ENCODE measurements at regions of chr2 and their contacts with region 1.

Region 1: GRCh38 chr2:64644177-64645004 is 9.3 kb downstream of the SERTAD2 start:
- DNase-seq: peak; percentile 82
- ATAC-seq: peak; percentile 75
- H3K4me3 Mint-ChIP-seq: peak overlapping the region; percentile 82
- H3K27ac Mint-ChIP-seq: peak overlapping the region; percentile 90
- H3K4me1 Mint-ChIP-seq: peaks cover 89% of the 10 kb centered on the region
- H3K27me3 Mint-ChIP-seq: no peaks in the 10 kb centered on the region
- CTCF ChIP-seq: no peak

Region 2: DNA sequence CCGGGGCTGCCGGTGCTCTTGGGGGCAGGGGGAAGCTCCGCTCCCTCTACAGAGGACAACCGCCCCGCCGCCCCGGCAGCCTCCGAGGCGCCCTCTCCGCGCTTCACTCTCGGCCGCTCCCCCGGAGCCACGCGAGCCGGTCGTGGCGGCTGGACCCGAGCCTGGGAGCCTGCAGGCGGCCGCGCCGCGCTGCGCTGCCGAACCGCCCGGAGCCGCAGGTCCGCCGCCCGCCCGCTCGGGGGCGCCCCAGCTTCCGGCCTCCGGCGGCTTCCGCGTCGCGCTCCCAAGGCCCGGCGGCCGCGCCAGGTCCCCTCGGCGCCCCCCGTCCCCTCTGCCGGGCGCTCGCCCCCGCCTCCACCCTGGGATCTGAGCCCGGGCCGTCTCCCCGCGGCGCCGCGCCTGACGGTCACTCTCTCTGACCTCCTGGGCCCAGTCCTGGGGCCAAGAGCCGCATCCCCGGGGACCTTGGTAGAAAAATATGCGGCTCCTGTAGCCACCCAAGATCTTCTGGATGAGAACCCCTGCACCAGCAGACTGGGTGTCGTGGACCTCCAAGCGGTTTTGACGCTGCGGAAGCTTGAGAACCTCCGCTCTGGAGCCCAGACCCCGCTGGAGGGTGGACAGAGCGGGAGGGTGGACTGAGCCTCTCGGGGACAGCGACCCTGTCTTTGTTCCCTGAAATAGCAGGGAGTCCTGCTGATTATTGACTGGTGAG is 35.0 kb before region 1 on chr2:
- CTCF ChIA-PET with region 1: interaction called, 42 read pairs
- POLR2A ChIA-PET with region 1: interaction called, 25 read pairs
- intact Hi-C with region 1: loop called (anchors 5 kb)
- DNase-seq: peak; percentile 60
- ATAC-seq: peak; percentile 60
- H3K4me3 Mint-ChIP-seq: peak overlapping the region; percentile 60
- H3K27ac Mint-ChIP-seq: peak overlapping the region; percentile 59
- H3K4me1 Mint-ChIP-seq: peaks cover 22% of the 10 kb centered on the region
- H3K27me3 Mint-ChIP-seq: no peaks in the 10 kb centered on the region
- CTCF ChIP-seq: peak; percentile 26

Region 3: DNA sequence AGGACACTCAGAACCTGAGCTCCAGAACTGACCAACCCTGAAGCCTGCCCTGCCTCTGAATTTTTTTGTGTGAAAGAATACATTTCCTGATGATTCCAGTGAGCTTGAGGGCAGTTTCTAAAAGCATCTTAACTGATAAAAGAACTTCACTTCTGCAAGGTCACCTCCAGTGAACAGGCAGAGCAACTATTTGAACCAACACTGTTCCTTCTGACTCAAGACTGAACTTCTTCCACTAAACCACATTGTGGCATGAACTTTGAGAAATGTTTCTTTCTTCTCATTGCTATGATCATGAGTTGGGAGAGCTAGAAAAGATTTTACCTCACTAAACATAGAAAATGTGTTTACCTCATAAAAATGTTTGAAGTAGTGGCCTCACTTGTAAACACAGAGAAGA is 93.2 kb after region 1 on chr2:
- CTCF ChIA-PET with region 1: interaction called, 12 read pairs
- POLR2A ChIA-PET with region 1: interaction called, 3 read pairs
- intact Hi-C with region 1: no loop called
- DNase-seq: peak; percentile 37
- ATAC-seq: peak; percentile 82
- H3K4me3 Mint-ChIP-seq: peak overlapping the region; percentile 47
- H3K27ac Mint-ChIP-seq: peak overlapping the region; percentile 88
- H3K4me1 Mint-ChIP-seq: peaks cover 40% of the 10 kb centered on the region
- H3K27me3 Mint-ChIP-seq: no peaks in the 10 kb centered on the region
- CTCF ChIP-seq: no peak

Region 4: DNA sequence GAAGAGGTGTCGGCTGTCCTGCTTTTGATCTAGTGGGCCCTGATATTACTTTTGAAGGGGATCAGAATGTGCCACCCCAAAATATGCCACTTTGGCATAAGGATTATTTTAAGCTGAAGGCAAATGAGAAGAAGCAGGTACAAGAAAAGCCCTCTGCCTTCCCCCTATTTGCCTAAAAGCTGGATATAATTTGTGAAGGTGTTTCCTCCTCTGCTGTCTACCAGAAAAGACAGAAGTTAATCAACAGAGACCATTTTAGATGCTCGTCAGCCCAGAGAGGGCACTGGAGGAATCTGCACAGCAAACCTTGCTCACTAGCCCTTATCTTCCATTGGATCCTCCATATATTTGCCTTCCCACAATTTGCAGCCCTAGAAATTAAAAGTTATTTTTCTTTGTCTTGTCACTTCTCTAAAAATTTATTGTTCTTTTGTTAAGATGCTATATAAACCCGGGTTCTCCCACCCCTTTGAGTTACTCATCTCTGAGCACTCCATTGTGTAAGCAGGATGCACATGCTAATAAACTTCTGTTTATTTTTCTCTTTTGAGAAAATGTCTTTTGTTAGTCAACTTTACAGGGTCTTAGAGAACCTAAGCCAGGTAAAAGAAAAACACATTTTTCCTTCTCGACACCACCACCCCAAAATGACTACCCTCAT is 181.6 kb after region 1 on chr2:
- CTCF ChIA-PET with region 1: interaction called, 20 read pairs
- POLR2A ChIA-PET with region 1: interaction called, 4 read pairs
- intact Hi-C with region 1: loop called (anchors 5 kb)
- DNase-seq: no peak
- ATAC-seq: no peak
- H3K4me3 Mint-ChIP-seq: no peak overlapping the region
- H3K27ac Mint-ChIP-seq: no peak overlapping the region
- H3K4me1 Mint-ChIP-seq: peaks cover 7% of the 10 kb centered on the region
- H3K27me3 Mint-ChIP-seq: no peaks in the 10 kb centered on the region
- CTCF ChIP-seq: no peak

Region 5: DNA sequence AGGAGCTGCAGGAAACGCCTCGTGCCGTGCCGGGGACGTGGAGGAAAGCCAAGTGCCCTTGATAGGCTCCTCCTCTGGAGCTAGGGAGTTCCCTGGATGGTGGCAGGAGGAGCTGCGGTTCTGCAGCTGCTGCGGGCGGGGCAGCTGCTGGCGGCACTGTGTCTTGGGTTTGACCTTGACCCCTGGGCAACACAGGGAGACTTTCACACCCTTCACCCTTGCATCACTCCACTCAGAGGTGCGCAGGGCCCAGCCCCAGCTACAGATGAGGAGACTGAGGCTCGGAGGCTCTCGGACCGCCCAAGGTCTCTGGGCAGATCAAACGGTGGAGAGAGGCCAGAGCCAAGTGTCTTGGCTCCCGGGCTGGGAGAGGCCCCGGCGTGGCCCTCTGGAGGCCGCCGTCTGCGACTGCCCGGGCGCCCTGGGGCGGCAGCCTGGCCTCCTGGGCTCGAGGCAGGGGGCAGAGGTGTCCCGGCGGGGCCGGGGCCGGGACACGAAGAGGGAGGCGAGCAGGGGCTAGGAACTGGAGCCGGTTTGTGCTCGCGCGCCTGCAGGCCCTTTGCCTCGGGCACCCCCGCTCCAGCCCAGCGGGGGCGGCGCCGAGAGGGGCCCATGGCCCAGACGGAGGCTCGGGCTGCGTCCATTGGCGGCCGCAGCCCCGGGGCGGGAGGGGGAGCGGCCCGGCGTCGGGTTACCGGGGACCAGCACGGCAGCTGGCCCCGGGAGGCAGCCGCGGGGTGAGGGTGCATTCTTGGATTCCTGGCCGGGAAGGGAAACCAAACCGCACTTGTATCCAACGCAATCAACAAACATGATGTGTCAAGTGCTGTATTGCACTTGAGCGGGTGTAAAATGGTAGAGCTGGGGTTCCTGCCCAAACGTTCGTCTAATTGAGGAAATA is 215.2 kb after region 1 on chr2:
- CTCF ChIA-PET with region 1: interaction called, 18 read pairs
- POLR2A ChIA-PET with region 1: no interaction called
- intact Hi-C with region 1: loop called (anchors 5 kb)
- DNase-seq: no peak
- ATAC-seq: no peak
- H3K4me3 Mint-ChIP-seq: no peak overlapping the region
- H3K27ac Mint-ChIP-seq: no peak overlapping the region
- H3K4me1 Mint-ChIP-seq: peaks cover 8% of the 10 kb centered on the region
- H3K27me3 Mint-ChIP-seq: peaks cover 6% of the 10 kb centered on the region
- CTCF ChIP-seq: no peak

Measured in activated CD8-positive, alpha-beta T cell treated with anti-CD3 and anti-CD28 coated beads for 36 hours (primary cell).